Activated naive CD8-positive, alpha-beta T cell treated with anti-CD3 and anti-CD28 coated beads, Interleukin-2, amount 10 ng/mL, durations not matched to agents 7 days and 5 days (primary cell): ENCODE measurements at regions of chr12 and their contacts with region 1.

Region 1: GRCh38 chr12:29148911-29149690 is at the start of gene FAR2:
- DNase-seq: peak; percentile 74
- ATAC-seq: peak; percentile 83
- H3K4me3 Mint-ChIP-seq: peak within 1 kb of the TSS; percentile 90
- H3K27ac Mint-ChIP-seq: peak within 1 kb of the TSS; percentile 91
- H3K4me1 Mint-ChIP-seq: peaks cover 25% of the 10 kb centered on the region
- H3K27me3 Mint-ChIP-seq: no peaks in the 10 kb centered on the region
- total RNA-seq, gene FAR2: 14.5 to 16.9 TPM

Region 2: GRCh38 chr12:29103539-29103974 is 45.5 kb before region 1 on chr12:
- POLR2A ChIA-PET with region 1: interaction called, 13 read pairs
- DNase-seq: peak; percentile 44
- ATAC-seq: peak; percentile 88
- H3K4me3 Mint-ChIP-seq: peak overlapping the region; percentile 67
- H3K27ac Mint-ChIP-seq: peak overlapping the region; percentile 96
- H3K4me1 Mint-ChIP-seq: peaks cover 35% of the 10 kb centered on the region
- H3K27me3 Mint-ChIP-seq: no peaks in the 10 kb centered on the region

Region 3: GRCh38 chr12:29171421-29172258 is 22.5 kb after region 1 on chr12:
- POLR2A ChIA-PET with region 1: no interaction called
- DNase-seq: no peak
- ATAC-seq: no peak
- H3K4me3 Mint-ChIP-seq: no peak overlapping the region
- H3K27ac Mint-ChIP-seq: no peak overlapping the region
- H3K4me1 Mint-ChIP-seq: peaks cover 2% of the 10 kb centered on the region
- H3K27me3 Mint-ChIP-seq: no peaks in the 10 kb centered on the region

Region 4: DNA sequence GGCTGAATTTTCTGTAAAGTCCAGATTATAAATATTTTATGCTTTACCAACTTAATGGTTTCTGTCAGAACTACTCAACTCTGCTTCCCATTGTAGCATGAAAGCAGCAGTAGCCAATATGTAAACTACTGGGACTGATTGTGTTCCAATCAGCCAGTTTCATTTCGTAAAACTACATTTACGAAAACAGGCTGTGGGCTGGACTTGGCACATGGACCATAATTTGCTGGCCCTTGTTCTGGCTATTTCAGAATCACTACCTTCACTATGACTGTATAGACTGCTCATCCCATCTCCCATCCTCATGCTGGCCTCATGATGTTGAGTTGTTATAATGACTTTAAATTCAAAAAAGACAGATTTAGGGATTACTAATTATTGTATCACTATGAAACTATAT is 38.7 kb after region 1 on chr12:
- POLR2A ChIA-PET with region 1: no interaction called
- DNase-seq: no peak
- ATAC-seq: no peak
- H3K4me3 Mint-ChIP-seq: no peak overlapping the region
- H3K27ac Mint-ChIP-seq: no peak overlapping the region
- H3K4me1 Mint-ChIP-seq: no peaks in the 10 kb centered on the region
- H3K27me3 Mint-ChIP-seq: no peaks in the 10 kb centered on the region